AG04450 (cell line): ENCODE measurements at regions of chr1 and their contacts with region 1.

Region 1: GRCh38 chr1:54377040-54377691 is 29.0 kb downstream of the SSBP3 start:
- DNase-seq: no peak
- H3K4me3 ChIP-seq: no peak overlapping the region
- H3K27ac ChIP-seq: no peak overlapping the region
- H3K27me3 ChIP-seq: no peaks in the 10 kb centered on the region
- CTCF ChIP-seq: no peak

Region 2: GRCh38 chr1:54406339-54407153 is 29.4 kb after region 1 on chr1 and contains the start of gene SSBP3:
- CTCF ChIA-PET with region 1: interaction called, 5 read pairs
- POLR2A ChIA-PET with region 1: interaction called, 11 read pairs
- DNase-seq: peak; percentile 61
- H3K4me3 ChIP-seq: peak within 1 kb of the TSS; percentile 79
- H3K27ac ChIP-seq: peak within 1 kb of the TSS; percentile 57
- H3K27me3 ChIP-seq: no peaks in the 10 kb centered on the region
- CTCF ChIP-seq: no peak
- polyA plus RNA-seq, gene SSBP3: 33.8 and 34.3 TPM in 2 replicates